Vagina (tissue), 2 donors: ENCODE measurements at regions of chr15 and their contacts with region 1.

Region 1: DNA sequence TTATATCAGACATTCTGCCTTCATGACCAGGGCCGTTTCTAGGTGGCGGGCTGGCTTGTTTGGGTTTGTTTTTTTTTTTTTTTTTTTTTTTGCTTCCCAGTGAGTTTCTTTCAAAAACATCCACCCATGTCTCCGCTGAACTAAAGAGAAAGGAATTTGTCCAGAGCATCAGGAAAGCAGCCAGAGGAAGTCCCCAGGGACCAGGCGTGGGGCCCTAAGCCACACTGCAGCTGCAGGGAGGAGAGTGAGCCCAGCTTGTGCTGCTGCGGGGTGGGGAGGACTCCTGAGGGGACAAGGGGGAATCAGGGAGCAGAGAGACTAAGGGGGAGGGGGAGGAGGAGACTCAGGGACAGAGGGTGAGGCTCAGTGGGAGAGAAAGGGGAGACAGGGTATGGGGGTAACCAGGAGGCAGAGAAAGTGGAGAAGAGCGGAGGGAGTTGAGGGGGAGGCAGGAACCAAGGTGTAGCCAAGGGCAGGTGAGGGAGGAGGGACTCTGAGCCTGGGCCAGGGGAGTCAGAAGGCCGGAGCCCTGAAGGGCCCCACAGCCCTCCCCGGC is 49.5 kb downstream of the CYP11A1 start:
- DNase-seq: no peak
- H3K4me3 ChIP-seq: no peak overlapping the region
- H3K27ac ChIP-seq: peak overlapping the region; percentile 70
- H3K4me1 ChIP-seq: peaks cover 56% of the 10 kb centered on the region
- H3K27me3 ChIP-seq: no peaks in the 10 kb centered on the region
- CTCF ChIP-seq: no peak
- POLR2A ChIP-seq: no peak

Region 2: GRCh38 chr15:74053941-74054529 is 263.9 kb before region 1 on chr15:
- intact Hi-C with region 1: loop called (anchors 10 kb)
- DNase-seq: no peak
- H3K4me3 ChIP-seq: peak overlapping the region in 1 of 2 donors; percentile 22
- H3K27ac ChIP-seq: peak overlapping the region; percentile 68
- H3K4me1 ChIP-seq: peaks cover 41% of the 10 kb centered on the region
- H3K27me3 ChIP-seq: no peaks in the 10 kb centered on the region
- CTCF ChIP-seq: peak; percentile 6 to 77 (median 45)
- POLR2A ChIP-seq: no peak

Region 3: DNA sequence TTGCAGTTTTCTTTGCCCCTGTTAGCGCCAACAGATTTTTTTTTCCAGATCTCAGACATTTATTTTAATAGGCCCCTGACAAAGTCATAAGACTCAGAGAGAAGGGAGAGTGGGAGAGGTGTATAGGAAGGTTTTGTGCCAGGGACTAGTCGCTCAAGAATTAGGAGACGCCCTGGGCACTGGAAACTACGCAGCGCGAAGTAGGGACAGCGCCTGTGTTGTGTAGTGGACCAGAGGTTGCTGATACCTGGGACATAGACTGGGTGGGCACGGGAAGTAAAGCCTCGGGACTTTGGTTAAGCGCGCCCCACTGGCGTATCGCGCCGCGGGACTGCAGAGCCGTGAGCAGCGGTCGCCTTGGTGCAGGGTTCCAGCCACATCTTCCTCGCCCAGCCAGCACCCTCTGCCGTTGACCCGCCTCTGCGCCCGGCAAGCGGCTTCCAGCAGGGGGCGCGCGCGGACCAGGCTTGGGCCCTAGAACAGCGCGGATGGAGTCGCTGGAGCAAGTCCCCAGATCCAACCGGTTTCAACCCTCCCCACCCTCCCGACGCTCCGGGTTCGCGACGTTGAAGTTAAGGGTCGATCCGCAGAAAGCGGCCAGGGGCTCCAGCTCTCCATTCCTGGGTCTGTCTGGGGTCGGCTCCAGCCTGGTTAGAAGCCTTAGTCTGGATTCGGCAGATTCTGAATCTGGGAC is 190.5 kb before region 1 on chr15:
- intact Hi-C with region 1: loop called (anchors 2 kb)
- DNase-seq: peak in 1 of 2 donors; percentile 85
- H3K4me3 ChIP-seq: peak overlapping the region; percentile 34 to 39
- H3K27ac ChIP-seq: no peak overlapping the region
- H3K4me1 ChIP-seq: peaks cover 31% of the 10 kb centered on the region
- H3K27me3 ChIP-seq: peaks cover 19% of the 10 kb centered on the region
- CTCF ChIP-seq: peak; percentile 82 to 100 (median 96)
- POLR2A ChIP-seq: no peak

Region 4: GRCh38 chr15:74275957-74276356 is 41.9 kb before region 1 on chr15:
- intact Hi-C with region 1: no loop called
- DNase-seq: no peak
- H3K4me3 ChIP-seq: no peak overlapping the region
- H3K27ac ChIP-seq: no peak overlapping the region
- H3K4me1 ChIP-seq: no peaks in the 10 kb centered on the region
- H3K27me3 ChIP-seq: no peaks in the 10 kb centered on the region
- CTCF ChIP-seq: no peak
- POLR2A ChIP-seq: no peak